ENCODE measurements at regions of chr10 and their contacts with region 1.

Region 1: DNA sequence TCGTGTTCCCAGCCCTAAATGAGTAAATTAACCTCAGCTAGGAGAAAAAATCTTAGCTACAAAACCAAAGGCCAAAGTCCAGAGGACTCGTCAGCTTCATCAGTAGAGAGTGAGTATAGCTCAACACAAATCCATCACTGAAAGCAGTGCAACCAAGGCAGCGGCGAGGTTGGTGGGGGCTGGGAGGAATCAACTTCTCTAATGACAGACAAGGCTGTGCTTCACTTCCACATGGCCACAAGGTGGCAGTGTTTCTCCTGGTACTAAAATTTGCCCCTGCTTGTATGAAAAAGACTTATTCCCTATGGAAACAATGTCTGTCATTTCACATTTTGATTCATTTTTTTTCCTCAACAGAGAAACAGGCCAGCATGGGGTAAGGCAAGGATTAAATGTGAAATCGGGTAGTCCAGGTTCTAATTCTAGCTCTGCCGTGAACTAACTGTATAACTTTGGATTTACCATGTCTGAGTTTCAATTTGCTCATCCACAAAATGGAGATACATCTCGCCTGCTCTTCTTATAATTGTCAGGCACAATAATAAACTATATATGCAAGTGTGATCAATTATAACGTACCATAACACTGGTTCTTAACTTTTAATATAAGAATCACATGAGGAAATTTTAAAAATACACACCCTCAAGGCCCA is 39.3 kb downstream of the FAS start:
- DNase-seq: peak; percentile 63 to 75
- ATAC-seq: peak; percentile 71

Region 2: DNA sequence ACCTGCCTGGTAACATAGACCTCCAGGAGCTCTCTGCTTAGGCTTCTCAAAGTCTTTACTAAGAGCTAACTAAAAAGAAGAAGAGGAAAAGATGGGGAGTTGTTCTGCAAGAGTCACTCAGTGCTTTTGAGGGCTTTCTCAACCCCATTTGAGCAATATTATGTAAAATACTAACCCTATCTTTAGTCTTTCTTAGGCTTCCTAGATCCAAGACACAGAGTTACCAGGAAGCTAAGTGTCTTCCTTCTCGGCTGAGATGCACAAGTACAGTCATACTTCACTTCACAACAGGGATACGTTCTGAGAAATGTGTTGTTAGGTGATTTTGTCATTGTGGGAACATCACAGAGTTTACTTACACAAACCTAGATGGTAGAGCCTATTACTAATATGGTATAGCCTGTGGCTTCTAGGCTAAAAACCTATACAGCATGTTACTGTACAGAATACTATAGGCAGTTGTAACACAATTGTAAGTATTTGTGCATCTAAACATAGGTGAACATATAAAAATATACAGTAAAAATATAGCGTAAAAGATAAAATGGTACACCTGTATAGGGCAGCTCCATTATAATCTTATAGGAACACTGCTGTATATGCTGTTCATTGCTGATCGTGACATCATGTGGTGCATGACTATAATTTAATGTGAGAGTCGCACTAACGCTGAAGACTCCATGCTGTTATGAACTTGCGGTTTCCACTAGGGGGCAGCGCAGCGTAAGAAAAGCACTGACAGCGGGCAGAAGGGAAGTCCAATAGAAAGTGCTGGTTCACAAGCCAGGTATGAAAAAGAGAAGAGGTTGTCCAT is 194.6 kb before region 1 on chr10:
- intact Hi-C with region 1: loop called in 1 of 2 experiments (anchors 10 kb)
- DNase-seq: peak; percentile 81 to 91
- ATAC-seq: peak; percentile 96

Region 3: DNA sequence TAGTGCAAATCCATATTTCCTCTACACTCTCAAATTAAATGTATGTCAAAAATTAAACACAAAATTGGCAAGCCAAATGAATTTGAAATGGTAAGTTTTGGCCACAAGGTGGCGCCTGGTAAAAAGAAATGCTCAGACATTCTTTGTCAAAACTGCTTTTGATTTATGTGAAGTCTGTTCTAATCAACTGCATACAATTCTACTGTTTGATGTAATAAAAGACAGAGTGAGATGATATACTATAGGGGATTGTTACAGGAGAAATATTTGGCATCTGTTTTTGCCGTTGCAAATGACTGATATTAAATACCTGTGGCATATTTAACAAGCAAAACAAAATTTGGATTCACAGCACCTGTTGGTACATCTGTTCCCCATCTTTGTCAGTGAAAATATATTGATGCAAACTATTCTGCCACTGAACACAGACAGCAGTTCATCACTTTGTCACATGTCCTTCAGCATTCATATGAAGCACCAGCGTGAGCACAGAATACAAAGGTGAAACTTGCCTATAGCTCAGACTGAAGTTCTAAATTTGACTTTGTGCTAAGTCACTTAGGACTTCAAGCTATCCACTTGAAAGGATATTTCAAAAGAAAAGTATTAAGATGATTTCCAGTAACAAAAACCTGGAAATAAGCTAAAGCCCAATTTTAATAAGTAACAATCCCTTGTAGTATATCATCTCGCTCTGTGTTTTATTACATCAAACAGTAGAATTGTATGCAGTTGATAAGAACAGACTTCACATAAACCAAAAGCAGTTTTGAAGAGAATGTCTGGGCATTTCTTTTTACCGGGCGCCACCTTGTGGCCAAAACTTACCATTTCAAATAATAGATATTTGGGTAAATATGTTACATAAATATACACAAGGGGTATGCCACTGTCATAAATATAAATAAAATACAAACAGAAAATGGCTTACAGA is 187.4 kb after region 1 on chr10:
- intact Hi-C with region 1: loop called (anchors 2 to 10 kb)
- DNase-seq: peak in 1 of 2 donors; percentile 68
- ATAC-seq: peak; percentile 65

Measured in left colon (tissue), 2 donors.